AG04449 (cell line): ENCODE measurements at regions of chr7 and their contacts with region 1.

Region 1: DNA sequence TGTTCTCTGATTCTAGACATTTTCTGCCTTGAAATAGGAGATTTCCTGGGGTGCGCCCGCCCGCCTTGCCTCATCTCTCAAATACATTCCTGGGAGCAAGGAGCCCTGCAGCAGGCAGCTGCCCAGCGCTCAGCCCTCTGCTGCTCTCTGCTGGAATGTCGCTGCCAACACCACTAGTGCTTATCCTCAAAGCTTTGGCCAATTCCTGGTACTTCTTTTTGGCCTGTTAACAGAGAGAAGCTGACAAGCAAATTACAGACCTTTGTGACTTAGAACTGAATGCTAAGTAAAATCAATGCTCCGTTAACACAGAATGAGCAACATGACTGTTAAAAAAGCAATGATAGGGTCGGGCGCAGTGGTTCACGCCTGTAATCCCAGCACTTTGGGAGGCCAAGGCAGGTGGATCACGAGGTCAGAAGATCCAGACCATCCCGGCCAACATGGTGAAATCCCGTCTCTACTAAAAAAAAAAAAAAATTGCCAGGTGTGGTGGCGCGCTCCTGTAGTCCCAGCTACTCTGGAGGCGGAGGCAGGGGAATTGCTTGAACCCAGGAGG is 41.9 kb upstream of the SYPL1 start:
- DNase-seq: no peak
- H3K4me3 ChIP-seq: no peak overlapping the region
- CTCF ChIP-seq: peak; percentile 92

Region 2: DNA sequence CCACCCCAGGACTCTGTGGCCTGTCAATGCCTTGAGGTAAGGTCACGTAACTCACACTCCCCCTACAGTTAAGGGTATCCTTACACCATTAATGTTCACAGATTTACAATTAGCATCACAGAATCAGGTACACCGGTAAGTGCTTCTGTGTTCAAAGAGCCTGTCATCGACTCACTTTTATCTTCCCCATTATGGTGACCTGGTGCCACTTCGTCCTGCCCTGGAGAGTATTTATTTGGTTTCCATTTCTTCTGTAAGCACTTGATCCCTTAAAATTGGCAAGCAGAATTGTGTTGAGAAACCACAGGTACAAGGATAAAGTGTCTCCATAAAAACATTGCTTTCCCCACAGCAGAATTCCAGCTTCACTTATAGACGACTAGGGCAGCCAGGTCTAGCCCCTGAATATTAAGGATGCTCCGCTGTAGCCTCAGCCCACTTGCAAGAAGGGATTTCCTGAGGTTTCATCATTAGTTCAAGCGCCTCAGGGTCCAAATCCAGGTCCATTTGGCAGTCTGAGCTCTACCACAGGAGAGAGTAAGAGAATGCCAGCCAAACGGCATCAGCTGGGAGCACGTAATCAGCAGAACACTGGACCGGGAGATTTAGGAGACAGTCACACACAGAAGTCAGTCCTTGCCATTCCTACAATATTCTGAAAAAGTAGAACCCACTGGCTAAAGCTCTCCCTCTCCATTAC is 287.7 kb before region 1 on chr7:
- CTCF ChIA-PET with region 1: no interaction called
- POLR2A ChIA-PET with region 1: no interaction called
- DNase-seq: no peak
- H3K4me3 ChIP-seq: no peak overlapping the region
- CTCF ChIP-seq: no peak

Region 3: GRCh38 chr7:106041140-106041717 is 112.7 kb before region 1 on chr7:
- CTCF ChIA-PET with region 1: interaction called, 40 read pairs
- POLR2A ChIA-PET with region 1: no interaction called
- DNase-seq: no peak
- H3K4me3 ChIP-seq: no peak overlapping the region
- CTCF ChIP-seq: peak; percentile 38

Region 4: DNA sequence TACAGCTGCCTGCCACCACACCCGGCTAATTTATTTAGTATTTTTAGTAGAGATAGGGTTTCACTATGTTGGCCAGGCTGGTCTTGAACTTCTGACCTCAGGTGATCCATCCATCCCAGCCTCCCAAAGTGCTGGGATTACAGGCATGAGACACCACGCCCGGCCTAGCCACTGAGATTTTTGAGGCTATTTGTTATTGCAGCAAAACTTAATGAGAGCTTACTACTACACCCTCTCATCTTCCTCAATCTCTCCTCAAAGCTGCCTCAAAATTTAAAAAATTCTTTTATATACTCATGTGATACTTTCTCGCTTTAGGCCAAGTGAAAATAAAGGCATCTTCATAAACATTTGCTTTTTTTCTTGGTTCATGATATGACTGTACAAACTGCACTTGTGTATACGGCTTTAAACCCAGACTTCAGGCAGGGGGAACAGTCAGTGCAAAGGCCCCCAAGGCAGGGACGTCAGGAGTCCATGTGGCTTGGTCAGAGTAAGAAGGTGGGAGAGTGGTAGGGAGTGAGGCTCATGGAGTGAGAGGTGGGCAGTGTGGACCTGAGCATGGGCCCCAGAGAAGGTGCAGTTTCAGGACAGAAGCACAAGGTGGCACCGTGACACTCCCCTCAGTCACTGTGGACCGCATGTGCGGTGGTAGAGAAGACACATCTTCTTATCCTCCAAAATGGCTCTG is 97.3 kb before region 1 on chr7:
- CTCF ChIA-PET with region 1: interaction called, 400 read pairs
- POLR2A ChIA-PET with region 1: interaction called, 3 read pairs
- DNase-seq: no peak
- H3K4me3 ChIP-seq: no peak overlapping the region
- CTCF ChIP-seq: peak; percentile 92

Region 5: DNA sequence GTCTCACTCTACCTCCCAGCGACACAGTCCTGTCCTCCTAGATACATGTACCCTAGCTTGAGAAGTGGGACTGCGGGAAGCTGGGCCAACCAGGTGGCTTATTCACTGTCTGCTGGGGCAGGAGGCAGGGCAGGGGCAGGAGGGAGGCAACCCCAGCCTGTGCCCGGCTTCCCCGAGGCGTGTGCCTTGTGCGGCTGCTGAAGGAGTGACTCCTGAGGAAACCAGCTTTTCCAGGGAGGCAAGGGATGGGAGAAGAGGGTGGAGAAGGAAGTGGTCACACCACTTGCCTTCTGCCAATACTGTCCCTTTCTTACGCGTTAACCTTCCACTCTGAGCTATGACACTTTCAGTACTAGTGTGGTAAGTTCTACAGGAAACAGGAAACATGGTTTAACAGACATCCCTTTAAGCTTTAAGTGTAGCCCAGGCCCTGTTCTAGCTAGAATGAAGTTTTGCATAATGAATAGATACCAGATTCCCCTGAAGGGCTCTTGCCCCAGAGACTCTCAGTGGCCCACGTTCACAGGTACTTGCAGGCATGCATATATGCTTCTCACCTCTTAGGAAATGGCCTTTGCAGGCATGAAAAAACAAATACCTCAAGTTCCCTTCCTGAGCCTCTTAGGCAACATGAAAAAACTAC is 82.5 kb before region 1 on chr7:
- CTCF ChIA-PET with region 1: interaction called, 31 read pairs
- POLR2A ChIA-PET with region 1: no interaction called
- DNase-seq: no peak
- H3K4me3 ChIP-seq: no peak overlapping the region
- CTCF ChIP-seq: no peak

Region 6: GRCh38 chr7:106139265-106140251 is 14.4 kb before region 1 on chr7:
- CTCF ChIA-PET with region 1: interaction called, 17 read pairs
- POLR2A ChIA-PET with region 1: no interaction called
- DNase-seq: peak; percentile 23
- H3K4me3 ChIP-seq: no peak overlapping the region
- CTCF ChIP-seq: no peak

Region 7: GRCh38 chr7:106583101-106583500 is 429.1 kb after region 1 on chr7:
- CTCF ChIA-PET with region 1: no interaction called
- POLR2A ChIA-PET with region 1: no interaction called
- DNase-seq: no peak
- H3K4me3 ChIP-seq: no peak overlapping the region
- CTCF ChIP-seq: no peak